Activated naive CD4-positive, alpha-beta T cell treated with anti-CD3 and anti-CD28 coated beads, Interleukin-2, amount 10 ng/mL, durations not matched to agents 7 days and 5 days (primary cell): ENCODE measurements at regions of chr16 and their contacts with region 1.

Region 1: GRCh38 chr16:29848420-29849297 is 14.4 kb downstream of the CDIPT start:
- DNase-seq: peak; percentile 90
- H3K4me3 Mint-ChIP-seq: no peak overlapping the region
- H3K27ac Mint-ChIP-seq: no peak overlapping the region
- H3K4me1 Mint-ChIP-seq: peaks cover 7% of the 10 kb centered on the region
- H3K27me3 Mint-ChIP-seq: no peaks in the 10 kb centered on the region

Region 2: DNA sequence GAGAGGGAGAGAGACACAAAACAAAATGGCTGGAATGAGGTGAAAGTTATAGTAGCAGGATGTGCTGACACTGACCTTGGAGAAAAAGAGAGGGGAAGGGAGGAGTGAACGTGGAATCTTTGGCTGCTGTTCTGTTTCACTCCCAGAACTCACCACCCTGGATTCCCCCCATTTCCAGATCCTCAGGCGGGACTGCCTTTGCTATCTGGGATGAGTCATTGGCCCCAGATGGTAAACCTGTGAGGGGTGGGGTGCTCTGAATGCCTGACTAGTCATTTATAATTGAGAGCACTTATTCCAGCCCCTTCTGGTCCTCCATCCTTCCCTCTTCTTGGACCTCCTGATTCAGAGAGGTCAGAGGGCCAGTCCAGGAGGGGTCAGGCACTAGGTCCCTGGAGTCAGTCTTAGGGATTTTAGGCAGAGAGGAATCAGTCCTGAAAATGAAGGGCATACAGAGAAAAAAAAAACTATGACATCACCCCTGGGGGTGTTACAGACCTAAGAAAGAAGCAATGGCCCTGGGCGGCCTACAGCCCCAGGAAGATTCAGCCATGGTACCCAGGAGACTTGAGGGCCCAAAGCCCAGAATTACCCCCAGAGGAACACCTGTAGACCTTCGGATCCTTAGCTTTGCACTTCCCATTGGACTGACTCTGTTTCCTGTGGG is 72.8 kb before region 1 on chr16:
- CTCF ChIA-PET with region 1: no interaction called
- DNase-seq: no peak
- H3K4me3 Mint-ChIP-seq: no peak overlapping the region
- H3K27ac Mint-ChIP-seq: no peak overlapping the region
- H3K4me1 Mint-ChIP-seq: no peaks in the 10 kb centered on the region
- H3K27me3 Mint-ChIP-seq: peaks cover 53% of the 10 kb centered on the region

Region 3: DNA sequence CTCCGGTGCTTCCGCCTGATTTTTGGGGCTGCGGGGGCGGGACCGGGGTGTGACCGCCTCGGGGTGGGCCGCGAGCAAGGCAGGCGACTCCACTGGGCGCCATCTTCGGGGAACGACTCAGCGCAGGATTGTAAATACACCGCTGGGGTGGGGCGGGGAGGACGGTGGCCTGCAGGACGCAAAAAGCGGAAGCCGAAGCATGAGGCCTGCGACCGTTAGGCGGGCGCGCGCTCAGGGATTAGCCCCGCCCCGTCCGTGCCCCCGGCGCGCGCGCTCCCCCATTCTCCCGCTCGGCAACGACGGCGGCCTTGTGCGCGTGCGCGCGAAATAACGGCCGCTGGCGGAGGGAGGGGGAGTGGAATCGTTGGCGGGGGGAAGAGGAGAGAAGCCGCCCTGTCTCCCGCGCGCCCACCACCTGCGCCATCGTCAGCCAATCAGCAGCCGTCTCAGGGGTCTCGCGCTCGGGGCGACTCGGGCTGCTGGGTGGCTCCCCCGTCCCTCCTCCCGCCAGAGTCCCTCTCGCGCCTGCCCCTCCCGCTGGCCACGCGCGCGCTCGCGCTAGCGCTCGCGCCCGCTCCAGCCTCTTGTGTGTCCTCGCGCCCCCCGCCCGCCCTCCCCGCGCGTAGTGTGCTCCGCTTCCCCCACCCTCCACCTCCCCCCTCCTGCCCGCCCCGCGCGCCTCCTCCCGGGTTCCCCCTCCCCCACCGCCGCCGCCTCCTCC is 43.1 kb before region 1 on chr16:
- CTCF ChIA-PET with region 1: interaction called, 31 read pairs
- DNase-seq: peak; percentile 99
- H3K4me3 Mint-ChIP-seq: peak overlapping the region; percentile 100
- H3K27ac Mint-ChIP-seq: peak overlapping the region; percentile 100
- H3K4me1 Mint-ChIP-seq: peaks cover 52% of the 10 kb centered on the region
- H3K27me3 Mint-ChIP-seq: peaks cover 6% of the 10 kb centered on the region

Region 4: DNA sequence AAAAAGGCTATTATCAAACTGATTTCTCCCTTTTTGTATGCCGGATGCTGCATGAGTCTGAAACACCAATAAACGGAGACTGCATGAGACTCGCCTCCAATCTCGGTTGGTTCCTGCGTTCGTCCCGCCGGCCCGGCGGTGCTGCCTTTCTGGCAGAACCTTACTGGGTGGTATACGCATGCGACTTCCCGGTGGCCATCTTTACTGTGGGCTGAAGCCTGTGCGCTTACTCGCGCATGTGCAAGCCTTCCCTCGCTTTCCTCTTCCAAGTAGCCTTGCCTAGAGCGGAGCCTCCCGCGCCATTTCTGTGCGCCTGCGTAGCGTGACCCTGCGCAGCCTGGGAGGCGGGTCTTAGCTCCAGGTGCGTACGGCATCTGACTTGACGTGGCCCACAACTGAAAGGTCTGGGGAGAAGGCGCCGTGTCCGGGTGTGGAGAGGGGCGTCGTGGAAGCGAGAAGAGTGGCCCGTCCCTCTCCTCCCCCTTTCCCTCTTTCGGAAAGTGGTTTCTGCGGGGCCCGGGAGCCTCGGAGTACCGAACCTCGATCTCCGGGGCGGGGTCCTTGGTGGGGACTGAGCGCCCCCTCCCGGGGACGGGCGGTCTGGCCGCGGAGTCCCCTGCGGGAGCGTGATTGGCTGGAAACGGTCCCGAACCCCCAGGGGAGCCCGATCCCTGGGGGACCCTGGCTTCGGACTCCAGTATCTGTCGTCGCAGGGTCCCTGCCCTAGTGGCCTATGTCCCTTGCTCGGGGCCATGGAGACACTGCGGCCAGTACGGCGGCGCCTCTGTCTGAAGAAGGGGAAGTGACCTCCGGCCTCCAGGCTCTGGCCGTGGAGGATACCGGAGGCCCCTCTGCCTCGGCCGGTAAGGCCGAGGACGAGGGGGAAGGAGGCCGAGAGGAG is 32.6 kb before region 1 on chr16 and contains the start of gene PAGR1:
- CTCF ChIA-PET with region 1: interaction called, 103 read pairs
- DNase-seq: peak; percentile 99
- H3K4me3 Mint-ChIP-seq: peak within 1 kb of the TSS; percentile 84
- H3K27ac Mint-ChIP-seq: peak within 1 kb of the TSS; percentile 94
- H3K4me1 Mint-ChIP-seq: peaks cover 75% of the 10 kb centered on the region
- H3K27me3 Mint-ChIP-seq: peaks cover 43% of the 10 kb centered on the region

Region 5: DNA sequence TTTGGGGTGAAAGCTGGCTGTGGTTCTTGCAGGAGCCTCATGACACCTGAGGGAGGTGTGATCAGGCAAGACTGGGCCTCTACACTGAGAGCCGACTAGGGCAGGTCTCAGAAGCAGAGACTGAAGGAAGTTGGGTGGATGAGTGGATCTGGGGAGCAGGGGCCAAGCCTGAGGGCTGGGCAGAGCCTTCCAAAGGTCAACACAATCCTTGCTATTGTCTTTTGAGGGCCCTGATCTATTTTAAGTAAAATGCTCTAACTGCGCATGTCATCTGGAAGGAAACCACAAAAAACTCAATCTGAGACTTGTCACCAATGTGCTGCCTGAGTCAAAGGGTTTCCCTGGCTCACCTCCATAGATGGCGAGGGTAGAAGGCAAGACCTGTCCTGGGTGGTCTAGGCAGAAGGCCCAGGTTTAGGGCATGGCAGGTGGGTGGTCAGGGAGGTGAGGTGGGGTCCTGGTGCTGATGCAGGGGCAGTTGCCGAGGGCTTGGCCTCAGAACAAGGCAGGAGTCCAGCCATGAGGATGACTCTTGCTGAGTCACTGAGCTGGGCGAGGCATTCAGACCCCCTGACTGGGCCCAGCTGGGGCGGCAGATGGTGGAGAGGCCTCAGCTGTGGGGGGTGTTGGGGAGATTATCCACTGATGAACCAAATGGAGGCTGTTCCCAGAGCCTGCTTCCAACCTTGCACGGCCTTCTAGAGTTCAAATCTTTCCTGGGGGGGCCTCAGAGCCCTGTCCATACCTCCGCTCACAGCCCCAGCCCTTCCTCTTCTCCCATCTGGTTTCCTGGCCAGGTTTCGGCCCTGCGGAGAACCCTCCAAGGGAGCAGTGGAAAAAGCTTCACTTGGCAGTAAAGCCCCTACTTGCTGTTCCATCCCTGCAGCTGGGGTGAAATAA is 23.3 kb before region 1 on chr16:
- CTCF ChIA-PET with region 1: interaction called, 103 read pairs
- DNase-seq: peak; percentile 54
- H3K4me3 Mint-ChIP-seq: peak overlapping the region; percentile 62
- H3K27ac Mint-ChIP-seq: peak overlapping the region; percentile 85
- H3K4me1 Mint-ChIP-seq: peaks cover 86% of the 10 kb centered on the region
- H3K27me3 Mint-ChIP-seq: no peaks in the 10 kb centered on the region

Region 6: GRCh38 chr16:29961479-29962343 is 113.1 kb after region 1 on chr16 and contains the start of gene TMEM219:
- CTCF ChIA-PET with region 1: no interaction called
- DNase-seq: peak; percentile 94
- H3K4me3 Mint-ChIP-seq: peak within 1 kb of the TSS; percentile 88
- H3K27ac Mint-ChIP-seq: peak within 1 kb of the TSS; percentile 90
- H3K4me1 Mint-ChIP-seq: peaks cover 25% of the 10 kb centered on the region
- H3K27me3 Mint-ChIP-seq: peaks cover 7% of the 10 kb centered on the region

Region 7: GRCh38 chr16:29973384-29974246 is 125.0 kb after region 1 on chr16 and contains the start of gene TAOK2:
- CTCF ChIA-PET with region 1: interaction called, 10 read pairs
- DNase-seq: peak; percentile 97
- H3K4me3 Mint-ChIP-seq: peak within 1 kb of the TSS; percentile 81
- H3K27ac Mint-ChIP-seq: peak within 1 kb of the TSS; percentile 91
- H3K4me1 Mint-ChIP-seq: peaks cover 38% of the 10 kb centered on the region
- H3K27me3 Mint-ChIP-seq: no peaks in the 10 kb centered on the region

Region 8: GRCh38 chr16:29987371-29988085 is 138.9 kb after region 1 on chr16:
- CTCF ChIA-PET with region 1: no interaction called
- DNase-seq: no peak
- H3K4me3 Mint-ChIP-seq: no peak overlapping the region
- H3K27ac Mint-ChIP-seq: no peak overlapping the region
- H3K4me1 Mint-ChIP-seq: no peaks in the 10 kb centered on the region
- H3K27me3 Mint-ChIP-seq: no peaks in the 10 kb centered on the region

Region 9: GRCh38 chr16:30183233-30184095 is 334.8 kb after region 1 on chr16 and contains the start of gene CORO1A:
- CTCF ChIA-PET with region 1: no interaction called
- DNase-seq: peak; percentile 91
- H3K4me3 Mint-ChIP-seq: peak within 1 kb of the TSS; percentile 100
- H3K27ac Mint-ChIP-seq: peak within 1 kb of the TSS; percentile 98
- H3K4me1 Mint-ChIP-seq: peaks cover 34% of the 10 kb centered on the region
- H3K27me3 Mint-ChIP-seq: peaks cover 5% of the 10 kb centered on the region